Caco-2 (cell line): ENCODE measurements at regions of chr11 and their contacts with region 1.

Region 1: DNA sequence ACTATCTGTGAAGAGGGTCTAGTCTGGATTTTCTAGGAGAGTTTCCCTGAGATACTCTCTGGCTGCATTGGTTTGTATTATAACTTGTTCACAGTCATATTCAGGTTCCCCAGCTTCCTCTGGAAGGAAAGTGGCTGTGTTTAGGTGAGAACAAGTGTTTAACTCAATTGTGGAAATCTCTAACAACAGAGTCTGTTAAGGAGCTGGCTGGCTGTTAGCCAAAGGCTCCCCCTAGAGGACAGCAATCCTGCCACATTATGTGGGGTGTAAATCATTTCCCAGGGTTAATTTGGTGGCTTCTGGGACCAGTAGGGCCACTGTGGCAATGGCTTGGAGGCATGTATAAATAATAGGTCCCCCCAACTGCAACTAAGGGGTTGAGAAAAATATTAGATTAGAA is 18.4 kb downstream of the MS4A6E start:
- DNase-seq: peak in 1 of 2 experiments; percentile 33
- H3K4me3 ChIP-seq: no peak overlapping the region
- H3K4me3 Mint-ChIP-seq: no peak overlapping the region
- H3K27ac Mint-ChIP-seq: no peak overlapping the region
- H3K4me1 ChIP-seq: no peaks in the 10 kb centered on the region
- H3K4me1 Mint-ChIP-seq: no peaks in the 10 kb centered on the region
- H3K27me3 ChIP-seq: no peaks in the 10 kb centered on the region
- H3K27me3 Mint-ChIP-seq: no peaks in the 10 kb centered on the region
- CTCF ChIP-seq: peak; percentile 28 to 47

Region 2: DNA sequence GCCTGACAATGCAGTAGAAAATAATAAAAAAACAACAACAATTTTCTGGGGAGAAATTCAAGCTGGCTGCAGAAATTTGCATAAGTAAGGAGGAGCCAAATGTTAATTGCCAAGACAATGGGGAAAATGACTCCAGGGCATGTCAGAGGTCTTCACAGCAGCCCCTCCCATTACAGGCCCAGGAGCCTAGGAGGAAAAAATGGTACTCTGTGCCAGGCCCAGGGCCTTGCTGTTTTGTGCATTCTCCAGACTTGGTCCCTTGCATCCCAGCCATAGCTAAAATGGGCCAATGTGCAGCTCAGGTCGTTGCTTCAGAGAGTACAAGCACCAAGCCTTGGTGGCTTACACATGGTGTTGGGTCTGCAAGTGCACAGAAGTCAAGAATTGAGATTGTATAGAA is 211.6 kb before region 1 on chr11:
- CTCF ChIA-PET with region 1: no interaction called
- POLR2A ChIA-PET with region 1: no interaction called
- intact Hi-C with region 1: no loop called
- DNase-seq: no peak
- H3K4me3 ChIP-seq: no peak overlapping the region
- H3K4me3 Mint-ChIP-seq: no peak overlapping the region
- H3K27ac Mint-ChIP-seq: no peak overlapping the region
- H3K4me1 ChIP-seq: no peaks in the 10 kb centered on the region
- H3K4me1 Mint-ChIP-seq: no peaks in the 10 kb centered on the region
- H3K27me3 ChIP-seq: no peaks in the 10 kb centered on the region
- H3K27me3 Mint-ChIP-seq: peaks cover 3% of the 10 kb centered on the region
- CTCF ChIP-seq: no peak

Region 3: GRCh38 chr11:60251485-60252212 is 93.8 kb before region 1 on chr11:
- CTCF ChIA-PET with region 1: no interaction called
- POLR2A ChIA-PET with region 1: no interaction called
- intact Hi-C with region 1: no loop called
- DNase-seq: peak in 1 of 2 experiments; percentile 13
- H3K4me3 ChIP-seq: no peak overlapping the region
- H3K4me3 Mint-ChIP-seq: no peak overlapping the region
- H3K27ac Mint-ChIP-seq: no peak overlapping the region
- H3K4me1 ChIP-seq: no peaks in the 10 kb centered on the region
- H3K4me1 Mint-ChIP-seq: no peaks in the 10 kb centered on the region
- H3K27me3 ChIP-seq: no peaks in the 10 kb centered on the region
- H3K27me3 Mint-ChIP-seq: peaks cover 6% of the 10 kb centered on the region
- CTCF ChIP-seq: peak; percentile 21 to 26

Region 4: GRCh38 chr11:60292145-60292544 is 53.3 kb before region 1 on chr11:
- CTCF ChIA-PET with region 1: no interaction called
- POLR2A ChIA-PET with region 1: no interaction called
- intact Hi-C with region 1: no loop called
- DNase-seq: no peak
- H3K4me3 ChIP-seq: no peak overlapping the region
- H3K4me3 Mint-ChIP-seq: no peak overlapping the region
- H3K27ac Mint-ChIP-seq: no peak overlapping the region
- H3K4me1 ChIP-seq: no peaks in the 10 kb centered on the region
- H3K4me1 Mint-ChIP-seq: no peaks in the 10 kb centered on the region
- H3K27me3 ChIP-seq: no peaks in the 10 kb centered on the region; the same call in 1 of the 2 replicates
- H3K27me3 Mint-ChIP-seq: peaks cover 7% of the 10 kb centered on the region
- CTCF ChIP-seq: no peak

Region 5: GRCh38 chr11:60303661-60304060 is 41.8 kb before region 1 on chr11:
- CTCF ChIA-PET with region 1: no interaction called
- POLR2A ChIA-PET with region 1: no interaction called
- intact Hi-C with region 1: no loop called
- DNase-seq: no peak
- H3K4me3 ChIP-seq: no peak overlapping the region
- H3K4me3 Mint-ChIP-seq: no peak overlapping the region
- H3K27ac Mint-ChIP-seq: no peak overlapping the region
- H3K4me1 ChIP-seq: no peaks in the 10 kb centered on the region
- H3K4me1 Mint-ChIP-seq: no peaks in the 10 kb centered on the region
- H3K27me3 ChIP-seq: no peaks in the 10 kb centered on the region
- H3K27me3 Mint-ChIP-seq: peaks cover 10% of the 10 kb centered on the region
- CTCF ChIP-seq: no peak

Region 6: DNA sequence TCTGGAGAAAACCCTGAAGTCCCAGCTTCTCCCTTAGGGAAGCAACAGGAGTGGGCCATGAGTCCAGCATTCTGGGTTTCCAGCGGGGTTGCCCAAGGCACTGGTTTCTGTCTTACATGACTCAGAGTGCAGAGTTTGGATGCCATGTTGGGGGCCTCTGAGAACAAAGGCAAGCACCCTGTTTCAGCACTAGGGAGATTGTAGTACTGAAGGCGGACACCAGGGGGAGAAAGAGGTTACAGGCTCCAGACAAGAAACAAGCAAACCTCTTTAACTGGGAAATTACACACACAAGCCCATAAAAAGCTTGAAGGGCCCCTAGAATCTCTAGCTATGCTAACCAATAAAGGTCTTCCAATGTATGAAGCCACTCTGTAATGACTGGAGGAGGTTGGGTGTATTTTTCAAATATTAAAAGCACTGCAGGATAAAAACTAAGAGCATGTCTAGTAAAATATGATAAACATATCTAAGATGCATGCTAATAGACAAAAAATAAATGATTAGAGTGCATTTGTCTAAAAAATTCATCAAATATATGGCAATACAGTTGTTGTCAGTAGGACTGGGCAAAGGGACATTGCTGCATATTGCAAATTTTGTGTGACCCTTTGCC is 11.4 kb before region 1 on chr11:
- CTCF ChIA-PET with region 1: interaction called, 7 read pairs
- POLR2A ChIA-PET with region 1: no interaction called
- intact Hi-C with region 1: loop called (anchors 1 kb)
- DNase-seq: peak; percentile 70 to 82
- H3K4me3 ChIP-seq: no peak overlapping the region
- H3K4me3 Mint-ChIP-seq: no peak overlapping the region
- H3K27ac Mint-ChIP-seq: no peak overlapping the region
- H3K4me1 ChIP-seq: no peaks in the 10 kb centered on the region
- H3K4me1 Mint-ChIP-seq: no peaks in the 10 kb centered on the region
- H3K27me3 ChIP-seq: no peaks in the 10 kb centered on the region
- H3K27me3 Mint-ChIP-seq: no peaks in the 10 kb centered on the region
- CTCF ChIP-seq: peak; percentile 81 to 85

Region 7: DNA sequence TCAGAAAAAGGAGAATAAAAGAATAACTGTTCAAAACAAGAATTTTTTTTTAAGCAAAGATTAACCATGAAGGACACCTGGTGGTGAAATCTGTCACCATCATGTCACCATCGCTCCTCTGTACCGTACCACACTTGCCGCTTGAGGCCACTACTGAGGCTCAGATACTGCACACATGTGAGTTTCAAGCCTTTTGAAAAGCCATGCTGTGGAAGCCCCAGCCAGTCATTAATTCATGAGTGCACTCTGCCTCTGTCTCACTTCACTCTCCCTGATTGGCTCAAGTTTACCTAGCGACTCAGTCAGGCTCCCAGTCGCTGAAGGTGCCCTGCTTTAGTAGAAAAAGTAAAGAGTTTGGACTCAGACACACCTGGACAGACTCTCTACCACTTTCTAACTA is 140.5 kb after region 1 on chr11:
- CTCF ChIA-PET with region 1: no interaction called
- POLR2A ChIA-PET with region 1: no interaction called
- intact Hi-C with region 1: loop called (anchors 5 kb)
- DNase-seq: peak; percentile 70 to 72
- H3K4me3 ChIP-seq: no peak overlapping the region
- H3K4me3 Mint-ChIP-seq: no peak overlapping the region
- H3K27ac Mint-ChIP-seq: no peak overlapping the region
- H3K4me1 ChIP-seq: no peaks in the 10 kb centered on the region
- H3K4me1 Mint-ChIP-seq: no peaks in the 10 kb centered on the region
- H3K27me3 ChIP-seq: no peaks in the 10 kb centered on the region
- H3K27me3 Mint-ChIP-seq: peaks cover 3% of the 10 kb centered on the region
- CTCF ChIP-seq: peak; percentile 83 to 93